Calu3 (cell line): ENCODE measurements at regions of chr6 and their contacts with region 1.

Region 1: DNA sequence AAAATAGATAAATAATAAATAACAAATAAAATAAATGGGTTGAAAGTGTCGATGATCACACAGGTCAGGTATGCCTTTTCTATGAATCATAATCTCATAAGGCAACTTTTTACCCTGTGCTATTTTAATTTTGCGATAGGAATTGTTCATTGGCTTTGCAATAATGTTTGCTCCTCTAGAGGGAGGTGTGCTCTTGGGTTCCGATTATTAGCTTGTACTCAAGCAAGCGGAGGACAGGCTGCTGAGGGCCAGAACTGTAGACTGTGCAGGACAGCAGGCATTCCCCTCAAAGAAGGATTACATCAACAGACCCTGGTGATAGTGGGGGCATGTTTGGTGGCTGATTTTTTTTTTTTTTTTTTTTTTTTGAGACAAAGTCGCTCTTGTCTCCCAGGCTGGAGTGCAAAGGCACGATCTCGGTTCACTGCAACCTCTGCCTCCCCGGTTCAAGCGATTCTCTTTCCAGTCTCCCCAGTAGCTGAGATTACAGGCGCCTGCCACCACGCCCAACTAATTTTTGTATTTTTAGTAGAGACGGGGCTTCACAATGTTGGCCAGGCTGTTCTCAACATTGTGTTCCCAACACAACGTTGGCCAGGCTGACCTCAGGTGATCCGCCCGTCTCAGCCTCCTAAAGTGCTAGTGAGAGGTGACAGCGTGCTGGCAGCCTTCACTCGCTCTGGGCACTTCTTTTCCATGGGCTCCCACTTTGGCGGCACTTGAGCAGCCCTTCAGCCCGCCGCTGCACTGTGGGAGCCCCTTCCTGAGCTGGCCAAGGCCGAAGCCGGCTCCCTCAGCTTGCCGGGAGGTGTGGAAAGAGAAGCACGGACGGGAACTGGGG is 35.6 kb downstream of the RIOK1 start:
- DNase-seq: peak; percentile 12
- H3K4me3 Mint-ChIP-seq: no peak overlapping the region
- H3K27ac Mint-ChIP-seq: no peak overlapping the region
- H3K4me1 Mint-ChIP-seq: no peaks in the 10 kb centered on the region
- H3K27me3 Mint-ChIP-seq: no peaks in the 10 kb centered on the region
- CTCF ChIP-seq: no peak

Region 2: DNA sequence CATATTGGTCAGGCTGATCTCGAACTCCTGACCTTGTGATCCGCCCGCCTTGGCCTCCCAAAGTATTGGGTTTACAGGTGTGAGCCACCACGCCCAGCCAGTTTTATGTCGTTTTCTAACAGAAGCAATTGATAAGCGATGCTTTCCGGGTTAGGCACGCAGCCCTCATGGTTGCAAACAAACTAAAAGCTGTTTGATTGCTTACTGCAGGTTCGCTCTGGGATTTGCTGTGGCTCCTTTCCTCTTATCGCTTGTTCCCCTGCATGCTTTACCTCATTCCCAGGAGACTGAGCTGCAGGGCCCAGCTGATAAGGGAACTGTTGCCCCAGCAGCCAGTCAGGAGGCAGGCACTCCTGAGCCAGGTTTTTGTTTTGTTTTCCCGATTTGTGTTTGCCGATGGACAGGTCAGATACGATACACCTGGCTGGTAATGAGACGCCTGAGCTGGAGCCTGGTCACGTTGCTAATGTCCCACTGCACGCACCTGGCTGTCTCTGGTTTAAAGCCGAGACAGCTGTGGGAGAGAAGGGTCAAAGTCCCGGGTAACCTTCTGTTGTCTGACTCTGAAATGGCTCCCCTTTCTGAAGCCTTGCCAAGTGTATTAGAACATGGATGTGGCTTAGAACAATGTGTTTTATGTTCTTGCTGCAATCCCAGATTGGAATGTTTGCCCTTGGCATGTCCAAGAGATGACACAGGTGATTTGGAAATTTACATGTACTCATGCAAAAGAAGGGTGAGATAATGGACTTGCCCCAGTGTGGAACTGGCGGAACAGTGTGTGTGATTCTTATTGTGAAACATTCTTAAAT is 136.2 kb after region 1 on chr6:
- CTCF ChIA-PET with region 1: interaction called, 12 read pairs
- intact Hi-C with region 1: no loop called
- DNase-seq: peak; percentile 60
- H3K4me3 Mint-ChIP-seq: peak overlapping the region; percentile 54
- H3K27ac Mint-ChIP-seq: peak overlapping the region; percentile 48
- H3K4me1 Mint-ChIP-seq: peaks cover 6% of the 10 kb centered on the region
- H3K27me3 Mint-ChIP-seq: no peaks in the 10 kb centered on the region
- CTCF ChIP-seq: no peak

Region 3: DNA sequence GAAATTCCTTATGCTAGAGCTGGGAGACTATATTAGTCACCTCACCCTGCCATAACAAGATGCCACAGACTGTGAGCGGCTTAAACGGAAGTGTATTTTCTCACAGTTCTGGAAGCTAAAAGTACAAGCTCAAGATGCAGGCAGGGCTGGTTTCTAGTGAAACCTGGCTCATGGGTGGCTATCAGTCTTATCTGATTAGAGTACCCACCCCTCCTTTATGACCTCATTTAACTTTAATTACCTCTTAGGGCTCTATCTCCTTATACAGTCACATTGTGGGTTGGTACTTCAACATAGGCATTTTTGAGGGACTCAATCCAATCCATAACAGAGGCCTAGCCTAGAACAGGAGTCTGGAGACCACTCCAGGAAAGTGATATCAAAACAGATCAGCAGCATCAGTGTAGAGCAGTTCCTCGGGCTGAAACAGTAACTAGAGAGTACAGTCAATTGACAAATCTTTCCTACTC is 162.5 kb after region 1 on chr6:
- CTCF ChIA-PET with region 1: no interaction called
- intact Hi-C with region 1: no loop called
- DNase-seq: no peak
- H3K4me3 Mint-ChIP-seq: no peak overlapping the region
- H3K27ac Mint-ChIP-seq: no peak overlapping the region
- H3K4me1 Mint-ChIP-seq: peaks cover 41% of the 10 kb centered on the region
- H3K27me3 Mint-ChIP-seq: no peaks in the 10 kb centered on the region
- CTCF ChIP-seq: no peak

Region 4: GRCh38 chr6:7615611-7616383 is 190.6 kb after region 1 on chr6:
- CTCF ChIA-PET with region 1: interaction called, 3 read pairs
- intact Hi-C with region 1: loop called (anchors 5 kb)
- DNase-seq: peak; percentile 32
- H3K4me3 Mint-ChIP-seq: peak overlapping the region; percentile 54
- H3K27ac Mint-ChIP-seq: peak overlapping the region; percentile 80
- H3K4me1 Mint-ChIP-seq: peaks cover 27% of the 10 kb centered on the region
- H3K27me3 Mint-ChIP-seq: peaks cover 17% of the 10 kb centered on the region
- CTCF ChIP-seq: peak; percentile 34